ENCODE measurements at regions of chr14 and their contacts with region 1.

Region 1: GRCh38 chr14:55160989-55161388 is 30.4 kb downstream of the DLGAP5 start:
- ATAC-seq: peak; percentile 56 to 75 (median 67)
- H3K4me3 ChIP-seq: no peak overlapping the region
- H3K27ac ChIP-seq: no peak overlapping the region
- H3K4me1 ChIP-seq: no peaks in the 10 kb centered on the region

Region 2: GRCh38 chr14:55000381-55000780 is 160.6 kb before region 1 on chr14:
- in situ Hi-C with region 1: no loop called
- ATAC-seq: no peak
- H3K4me3 ChIP-seq: no peak overlapping the region
- H3K27ac ChIP-seq: no peak overlapping the region
- H3K4me1 ChIP-seq: no peaks in the 10 kb centered on the region

Region 3: DNA sequence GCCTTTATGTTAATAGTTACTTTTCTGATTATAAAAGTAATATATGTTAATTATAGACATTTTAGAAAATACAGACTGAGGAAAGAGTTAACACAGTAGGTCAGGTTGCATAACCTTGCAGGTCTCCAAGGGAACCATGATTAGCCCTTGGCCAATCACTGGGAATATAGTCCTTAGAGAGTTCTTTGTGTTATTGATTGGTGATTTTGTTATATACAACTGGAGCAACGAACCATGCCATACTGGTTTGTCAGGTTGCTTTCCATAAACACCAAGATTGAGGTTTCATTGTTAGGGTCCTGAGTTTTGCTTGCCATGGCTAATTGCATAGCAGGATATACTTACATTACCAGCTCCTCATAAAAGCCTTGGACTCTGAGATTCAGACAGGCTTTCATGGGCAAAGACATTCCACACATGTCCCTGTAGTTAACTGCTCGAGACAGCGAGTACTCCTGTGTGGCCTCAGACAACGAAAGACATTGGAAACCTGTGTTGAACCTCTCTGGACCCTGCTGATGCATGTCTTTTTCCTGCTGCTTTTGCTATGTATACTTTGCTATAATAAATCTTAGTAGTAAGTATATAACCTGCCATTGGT is 75.8 kb before region 1 on chr14:
- in situ Hi-C with region 1: loop called in 2 of 9 experiments (anchors 10 kb)
- ATAC-seq: no peak
- H3K4me3 ChIP-seq: no peak overlapping the region
- H3K27ac ChIP-seq: no peak overlapping the region
- H3K4me1 ChIP-seq: no peaks in the 10 kb centered on the region